CD8-positive, alpha-beta T cell (primary cell): ENCODE measurements at regions of chrX and their contacts with region 1.

Region 1: DNA sequence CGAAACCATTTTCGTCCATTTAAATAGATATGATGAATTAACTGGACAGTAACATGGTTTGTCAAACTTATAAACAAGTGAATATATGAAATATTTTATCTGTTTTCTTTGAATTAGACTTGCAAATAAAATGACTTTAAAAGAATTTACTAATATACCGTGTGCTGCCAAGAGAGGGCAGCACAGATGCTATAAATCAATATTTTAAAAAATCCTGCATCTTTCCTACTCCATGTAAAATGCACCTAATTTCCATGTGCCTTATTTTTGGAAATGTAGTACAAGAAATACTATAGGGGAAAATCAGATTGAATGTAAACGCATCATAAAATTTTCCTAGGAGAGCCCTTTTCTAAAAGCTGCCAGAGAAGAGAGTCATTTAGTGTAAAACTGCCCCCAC is 62.2 kb downstream of the PRKX start:
- DNase-seq: peak in 3 of 9 experiments; percentile 16 to 45 (median 34)
- ATAC-seq: no peak
- H3K4me3 ChIP-seq: no peak overlapping the region
- H3K4me3 Mint-ChIP-seq: no peak overlapping the region
- H3K27ac ChIP-seq: no peak overlapping the region
- H3K27ac Mint-ChIP-seq: no peak overlapping the region
- H3K4me1 ChIP-seq: no peaks in the 10 kb centered on the region
- H3K4me1 Mint-ChIP-seq: no peaks in the 10 kb centered on the region
- H3K27me3 ChIP-seq: no peaks in the 10 kb centered on the region
- H3K27me3 Mint-ChIP-seq: no peaks in the 10 kb centered on the region
- CTCF ChIP-seq: peak; percentile 76

Region 2: DNA sequence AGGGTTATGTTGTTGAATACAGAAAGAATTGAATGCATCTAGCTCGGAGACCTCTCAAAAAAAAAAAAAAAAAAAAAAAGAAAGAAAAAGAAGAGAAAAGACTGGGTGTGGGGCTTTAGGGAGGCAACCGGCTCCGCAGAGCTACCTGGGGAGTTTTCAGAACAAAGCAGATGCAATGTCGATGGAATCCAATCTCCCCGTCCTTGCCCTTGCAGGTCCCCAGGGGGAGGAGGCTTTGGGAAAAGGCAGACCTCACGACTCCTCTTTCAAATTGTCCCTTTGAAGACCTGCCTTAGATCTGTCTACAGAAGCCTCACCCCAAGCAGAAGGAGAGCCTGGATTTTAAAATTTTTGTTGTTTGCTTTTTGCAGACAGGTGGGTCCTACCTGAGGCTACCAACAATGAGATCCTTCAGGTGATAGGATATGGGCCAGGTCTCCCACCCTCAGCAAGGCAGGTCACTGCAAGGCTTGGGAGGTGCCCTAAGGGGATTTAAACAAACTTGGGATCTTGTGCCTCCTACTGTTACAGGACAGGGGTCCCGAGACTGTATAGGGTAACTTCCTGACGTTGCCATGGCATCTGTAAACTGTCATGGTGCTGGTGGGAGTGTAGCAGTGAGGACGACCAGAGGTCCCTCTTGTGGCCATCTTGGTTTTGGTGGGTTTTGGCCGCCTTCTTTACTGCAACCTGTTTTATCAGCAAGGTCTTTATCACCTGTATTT is 137.4 kb after region 1 on chrX:
- CTCF ChIA-PET with region 1: interaction called, 10 read pairs
- POLR2A ChIA-PET with region 1: no interaction called
- intact Hi-C with region 1: no loop called
- DNase-seq: peak in 5 of 9 experiments; percentile 0 to 55 (median 29)
- ATAC-seq: no peak
- H3K4me3 ChIP-seq: no peak overlapping the region
- H3K4me3 Mint-ChIP-seq: no peak overlapping the region
- H3K27ac ChIP-seq: no peak overlapping the region
- H3K27ac Mint-ChIP-seq: no peak overlapping the region
- H3K4me1 ChIP-seq: no peaks in the 10 kb centered on the region
- H3K4me1 Mint-ChIP-seq: no peaks in the 10 kb centered on the region
- H3K27me3 ChIP-seq: no peaks in the 10 kb centered on the region
- H3K27me3 Mint-ChIP-seq: no peaks in the 10 kb centered on the region
- CTCF ChIP-seq: no peak

Region 3: DNA sequence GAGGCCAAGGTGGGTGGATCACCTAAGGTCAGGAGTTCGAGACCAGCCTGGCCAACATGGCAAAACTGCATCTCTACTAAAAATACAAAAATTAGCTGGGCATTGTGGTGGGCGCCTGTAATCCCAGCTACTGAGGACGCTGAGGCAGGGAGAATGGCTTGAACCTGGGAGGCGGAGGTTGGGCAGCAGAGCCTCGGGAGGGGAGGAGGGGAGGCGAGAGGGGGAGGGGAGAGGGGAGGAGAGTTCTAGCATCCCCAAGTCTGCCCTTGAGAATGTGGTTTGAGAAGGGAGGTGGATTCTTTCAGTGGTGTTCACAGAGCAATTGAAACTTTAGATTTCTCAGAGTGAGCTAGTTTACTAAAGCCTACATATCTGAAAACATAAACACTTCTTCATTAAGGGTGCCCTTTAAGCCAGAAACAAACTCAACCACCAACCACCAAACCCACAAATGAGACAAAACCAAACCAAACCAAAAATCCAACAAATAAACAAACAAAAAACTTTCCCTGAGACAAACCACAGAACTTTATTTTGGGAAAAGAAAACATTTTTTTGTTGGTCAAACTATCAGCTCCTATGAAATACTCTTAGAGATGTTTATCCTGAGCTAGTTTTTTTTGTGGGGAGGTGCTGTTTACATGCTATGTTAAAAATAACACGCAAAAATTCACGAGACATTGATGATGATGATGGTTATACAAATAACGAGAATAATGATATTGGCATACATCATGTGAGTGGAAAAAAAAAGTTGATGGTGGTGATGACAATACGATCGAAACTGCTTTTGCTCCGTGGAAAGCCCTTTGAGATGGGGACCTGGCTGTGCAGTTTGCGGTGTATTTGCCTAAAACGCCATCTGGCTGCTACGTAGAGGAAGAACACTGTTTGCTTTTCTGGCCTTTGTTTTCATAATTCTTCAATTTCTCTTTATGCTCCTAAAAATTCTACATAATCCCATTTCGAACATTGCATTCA is 160.3 kb after region 1 on chrX:
- CTCF ChIA-PET with region 1: interaction called, 22 read pairs
- POLR2A ChIA-PET with region 1: no interaction called
- intact Hi-C with region 1: loop called in 1 of 2 experiments (anchors 1 kb)
- DNase-seq: peak in 7 of 9 experiments; percentile 13 to 81 (median 36)
- ATAC-seq: no peak
- H3K4me3 ChIP-seq: no peak overlapping the region
- H3K4me3 Mint-ChIP-seq: peak overlapping the region; percentile 57
- H3K27ac ChIP-seq: no peak overlapping the region
- H3K27ac Mint-ChIP-seq: no peak overlapping the region
- H3K4me1 ChIP-seq: peaks cover 1% of the 10 kb centered on the region
- H3K4me1 Mint-ChIP-seq: peaks cover 9% of the 10 kb centered on the region
- H3K27me3 ChIP-seq: no peaks in the 10 kb centered on the region
- H3K27me3 Mint-ChIP-seq: peaks cover 11% of the 10 kb centered on the region
- CTCF ChIP-seq: peak; percentile 57